ENCODE measurements at regions of chr1 and their contacts with region 1.

Region 1: DNA sequence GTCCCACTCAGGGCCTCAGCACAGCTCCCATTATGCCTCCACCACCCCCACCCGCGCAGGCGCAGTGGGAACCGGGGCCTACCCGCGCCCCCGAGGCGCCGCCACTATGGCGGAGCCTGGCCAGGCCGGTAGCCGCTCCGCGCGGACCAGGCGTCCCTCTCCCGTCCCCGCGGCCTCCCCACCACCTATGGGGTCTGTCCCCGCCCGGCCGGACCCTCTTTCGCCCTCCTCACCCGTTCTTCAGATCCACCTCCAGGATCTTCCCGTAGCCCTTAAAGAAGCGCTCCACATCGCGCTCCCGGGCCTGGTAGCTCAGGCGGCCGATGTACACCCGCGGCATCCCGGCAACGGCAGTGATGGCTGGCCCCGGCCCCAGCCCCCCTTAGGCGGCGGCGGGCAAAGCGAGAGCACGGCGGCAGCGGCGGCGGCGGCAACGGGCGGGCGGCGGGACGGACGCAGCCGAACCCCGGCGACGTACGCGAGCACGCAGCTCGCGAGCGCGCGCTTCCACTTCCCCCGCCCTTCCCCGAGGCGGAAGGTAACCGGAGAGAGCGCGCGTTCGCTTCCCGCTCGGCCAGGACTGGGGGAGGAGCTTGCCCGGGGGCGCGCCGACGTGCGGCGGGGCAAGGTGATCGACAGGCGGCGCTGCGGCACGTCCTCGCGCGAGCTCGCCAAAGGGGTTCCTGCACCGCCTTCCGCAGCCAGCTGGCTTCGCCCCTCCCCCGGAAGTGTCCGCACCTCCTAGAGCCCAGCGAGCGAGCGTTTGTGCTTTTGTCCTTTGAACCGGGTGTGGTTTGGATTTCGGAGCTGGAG is at the start of gene SRSF4:
- DNase-seq: peak; percentile 100
- ATAC-seq: peak; percentile 97
- total RNA-seq, gene SRSF4: 52.4 TPM

Region 2: GRCh38 chr1:28648474-28649198 is 533.0 kb before region 1 on chr1 and contains the start of gene RNU11:
- intact Hi-C with region 1: loop called (anchors 2 kb)
- DNase-seq: peak; percentile 86
- ATAC-seq: peak; percentile 87
- total RNA-seq, gene RNU11: not detected

Region 3: DNA sequence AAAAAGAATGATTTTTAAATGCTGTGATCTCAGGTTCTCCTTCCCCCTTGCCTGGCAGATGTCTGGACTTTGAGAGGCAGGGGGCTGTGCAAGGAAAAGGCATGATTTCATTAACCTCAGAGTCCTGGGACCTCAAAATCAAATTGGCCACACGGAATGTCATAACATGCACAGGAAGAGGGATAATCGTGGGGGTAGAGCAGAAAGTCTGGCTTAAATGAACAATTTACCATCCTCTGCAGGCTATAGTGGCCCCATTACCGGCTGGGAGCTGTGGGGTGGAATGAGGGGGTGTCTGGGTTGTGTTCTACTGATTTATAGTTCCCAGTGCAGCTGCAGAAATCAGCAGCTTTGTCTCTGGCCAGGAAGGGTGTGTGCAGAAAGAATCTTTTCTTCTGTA is 358.8 kb before region 1 on chr1:
- intact Hi-C with region 1: no loop called
- DNase-seq: no peak
- ATAC-seq: no peak

Region 4: DNA sequence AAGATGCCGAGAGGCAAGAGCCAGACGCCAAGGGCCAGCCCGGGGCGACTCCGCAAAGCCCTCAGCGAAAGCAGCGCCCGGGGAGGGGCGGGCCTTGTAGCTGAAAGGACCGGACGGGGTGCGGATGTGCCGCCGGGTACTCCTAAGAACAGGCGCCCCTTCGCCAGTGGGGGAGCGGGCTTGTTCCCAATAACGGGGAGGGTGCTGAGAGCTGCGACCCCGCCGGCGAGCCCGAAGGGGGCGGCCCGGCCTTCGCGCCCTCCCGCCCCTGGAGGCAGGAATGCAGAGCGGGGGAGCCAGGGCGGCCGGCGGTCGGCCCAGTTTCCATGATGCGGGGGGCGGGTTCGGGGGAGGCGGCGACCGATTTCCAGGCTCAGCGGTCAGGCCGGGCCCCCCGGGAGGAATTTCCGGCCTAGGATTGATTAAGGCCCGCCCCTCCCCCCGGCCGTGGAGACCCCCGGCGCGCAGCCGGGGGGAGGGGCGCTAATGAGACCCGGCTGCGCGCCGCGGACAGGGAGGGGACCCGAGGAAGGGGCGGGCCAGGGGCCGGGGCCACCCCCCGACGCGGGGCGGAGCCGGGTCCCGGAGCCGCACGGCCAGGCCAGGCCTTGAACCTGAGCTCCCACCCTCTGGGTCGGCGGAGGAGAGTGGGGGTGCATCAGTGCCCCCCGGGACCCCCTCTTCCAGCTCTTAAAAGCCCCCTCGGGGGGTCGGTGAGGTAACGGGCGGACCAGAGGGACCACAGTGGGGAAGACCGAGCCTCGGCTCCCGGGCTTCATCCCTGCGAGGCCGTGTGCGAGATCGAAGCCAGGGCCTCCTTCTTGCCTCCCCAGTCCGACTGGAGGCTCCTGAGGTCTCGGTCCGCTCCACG is 57.0 kb before region 1 on chr1:
- intact Hi-C with region 1: loop called (anchors 5 kb)
- DNase-seq: peak; percentile 86
- ATAC-seq: peak; percentile 76